ENCODE measurements at regions of chr3 and their contacts with region 1.

Region 1: GRCh38 chr3:192467230-192468140 is 259.9 kb downstream of the FGF12 start:
- DNase-seq: peak; percentile 34
- ATAC-seq: peak; percentile 90
- H3K4me3 ChIP-seq: no peak overlapping the region
- H3K27ac ChIP-seq: no peak overlapping the region
- H3K4me1 ChIP-seq: no peaks in the 10 kb centered on the region
- H3K27me3 ChIP-seq: no peaks in the 10 kb centered on the region
- CTCF ChIP-seq: peak; percentile 72
- POLR2A ChIP-seq: no peak
- RAD21 ChIP-seq: peak; percentile 74

Region 2: GRCh38 chr3:192188218-192188835 is 279.2 kb before region 1 on chr3:
- CTCF ChIA-PET with region 1: no interaction called
- POLR2A ChIA-PET with region 1: no interaction called
- dilution Hi-C with region 1: no loop called
- in situ Hi-C with region 1: no loop called
- intact Hi-C with region 1: no loop called
- DNase-seq: peak; percentile 4
- ATAC-seq: no peak
- H3K4me3 ChIP-seq: no peak overlapping the region
- H3K27ac ChIP-seq: no peak overlapping the region
- H3K4me1 ChIP-seq: no peaks in the 10 kb centered on the region
- H3K27me3 ChIP-seq: no peaks in the 10 kb centered on the region
- CTCF ChIP-seq: peak; percentile 31; the same call in 1 of the 2 replicates
- POLR2A ChIP-seq: no peak
- RAD21 ChIP-seq: no peak

Region 3: GRCh38 chr3:192687488-192688152 is 220.1 kb after region 1 on chr3:
- CTCF ChIA-PET with region 1: no interaction called
- POLR2A ChIA-PET with region 1: no interaction called
- dilution Hi-C with region 1: no loop called
- in situ Hi-C with region 1: no loop called
- intact Hi-C with region 1: no loop called
- DNase-seq: no peak
- ATAC-seq: no peak
- H3K4me3 ChIP-seq: no peak overlapping the region
- H3K27ac ChIP-seq: no peak overlapping the region
- H3K4me1 ChIP-seq: no peaks in the 10 kb centered on the region
- H3K27me3 ChIP-seq: no peaks in the 10 kb centered on the region
- CTCF ChIP-seq: no peak
- POLR2A ChIP-seq: no peak
- RAD21 ChIP-seq: no peak

Region 4: DNA sequence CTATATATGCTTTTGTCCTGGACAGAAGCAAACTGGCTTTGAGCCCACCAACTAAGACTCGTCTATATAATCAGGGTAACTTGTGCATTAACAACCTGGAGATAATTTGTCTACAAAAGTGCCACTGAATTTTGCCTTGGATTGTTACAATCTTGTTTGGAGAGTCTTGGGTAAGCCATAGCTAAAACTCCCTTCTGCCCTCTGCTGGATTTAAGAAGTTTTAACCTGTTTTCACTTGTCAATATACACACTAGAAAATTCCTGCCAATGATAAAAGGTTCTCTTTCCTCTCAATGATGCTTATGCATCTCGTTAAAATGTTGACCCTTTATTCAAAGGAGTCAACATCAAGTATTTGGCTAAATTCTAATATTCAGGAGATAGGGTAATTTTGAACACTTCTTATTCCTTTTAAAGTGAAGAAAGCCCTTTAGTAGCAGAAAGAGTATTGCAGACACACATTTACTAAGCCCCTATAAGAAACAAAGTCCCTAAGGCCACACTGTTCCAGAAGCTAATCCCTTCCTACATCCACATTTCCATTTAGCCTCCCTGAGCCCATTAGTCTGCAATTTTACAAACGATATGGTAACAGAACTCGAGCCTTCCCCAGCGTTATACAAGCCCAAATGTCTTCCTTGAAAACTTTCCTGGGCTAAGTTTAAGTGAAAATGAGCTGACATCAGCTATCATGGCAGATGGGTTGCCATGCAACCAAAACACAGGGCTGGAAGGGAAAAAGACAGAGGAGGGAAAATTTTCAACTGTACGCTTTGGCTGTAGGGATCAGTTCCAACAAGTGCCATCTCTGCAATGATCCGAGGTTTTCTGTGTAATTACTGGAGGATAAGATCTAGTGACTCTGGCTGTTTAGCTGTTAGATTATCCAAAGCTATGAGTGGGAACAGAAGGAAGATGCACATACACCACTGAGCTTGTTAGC is 335.7 kb after region 1 on chr3:
- CTCF ChIA-PET with region 1: no interaction called
- POLR2A ChIA-PET with region 1: no interaction called
- dilution Hi-C with region 1: no loop called
- in situ Hi-C with region 1: no loop called
- intact Hi-C with region 1: loop called (anchors 1 kb)
- DNase-seq: peak; percentile 59
- ATAC-seq: peak; percentile 82
- H3K4me3 ChIP-seq: no peak overlapping the region
- H3K27ac ChIP-seq: no peak overlapping the region
- H3K4me1 ChIP-seq: no peaks in the 10 kb centered on the region
- H3K27me3 ChIP-seq: no peaks in the 10 kb centered on the region
- CTCF ChIP-seq: peak; percentile 48
- POLR2A ChIP-seq: no peak
- RAD21 ChIP-seq: peak; percentile 13; the same call in 1 of the 2 replicates